ENCODE measurements at regions of chr7 and their contacts with region 1.

Region 1: GRCh38 chr7:42574685-42575084 is 337.2 kb downstream of the C7orf25 start:
- DNase-seq: no peak
- H3K4me3 ChIP-seq: no peak overlapping the region
- H3K27ac ChIP-seq: peak overlapping the region in 3 of 4 donors; percentile 53 to 74 (median 68)
- H3K4me1 ChIP-seq: peaks cover 0 to 58% (median 45%) of the 10 kb centered on the region in 4 donors
- H3K27me3 ChIP-seq: no peaks in the 10 kb centered on the region
- CTCF ChIP-seq: peak in 3 of 4 experiments; percentile 13 to 30 (median 29)
- EP300 ChIP-seq: no peak
- POLR2A ChIP-seq: no peak

Region 2: DNA sequence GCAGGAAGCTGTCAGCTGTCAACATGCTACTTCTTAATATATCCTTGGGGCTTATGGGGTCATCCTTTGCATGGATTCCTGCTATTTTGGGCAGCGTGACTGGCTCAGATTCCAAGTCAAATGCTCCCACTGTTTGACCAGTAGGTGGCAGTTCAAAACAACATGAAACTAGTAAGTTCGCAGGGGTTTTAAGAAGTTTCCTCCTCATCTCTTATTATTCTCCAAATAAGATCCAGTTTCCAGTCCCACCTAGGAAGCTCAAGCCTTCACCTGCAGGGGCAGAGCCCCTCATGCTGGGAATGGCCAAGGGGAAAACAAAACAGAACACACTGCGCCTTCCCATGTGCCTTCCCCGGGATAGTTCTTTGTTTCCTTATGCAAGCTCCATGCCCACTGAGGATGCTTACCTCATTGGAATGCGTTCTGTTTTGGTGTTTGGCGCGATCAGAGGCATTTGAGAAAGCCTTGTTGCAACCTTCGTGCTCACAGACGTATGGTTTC is 597.5 kb before region 1 on chr7:
- intact Hi-C with region 1: loop called (anchors 5 kb)
- DNase-seq: no peak
- H3K4me3 ChIP-seq: no peak overlapping the region
- H3K27ac ChIP-seq: peak overlapping the region in 3 of 4 donors; percentile 58 to 70 (median 65)
- H3K4me1 ChIP-seq: peaks cover 0 to 56% (median 52%) of the 10 kb centered on the region in 4 donors
- H3K27me3 ChIP-seq: no peaks in the 10 kb centered on the region
- CTCF ChIP-seq: peak; percentile 55 to 79 (median 62)
- EP300 ChIP-seq: no peak
- POLR2A ChIP-seq: no peak

Region 3: DNA sequence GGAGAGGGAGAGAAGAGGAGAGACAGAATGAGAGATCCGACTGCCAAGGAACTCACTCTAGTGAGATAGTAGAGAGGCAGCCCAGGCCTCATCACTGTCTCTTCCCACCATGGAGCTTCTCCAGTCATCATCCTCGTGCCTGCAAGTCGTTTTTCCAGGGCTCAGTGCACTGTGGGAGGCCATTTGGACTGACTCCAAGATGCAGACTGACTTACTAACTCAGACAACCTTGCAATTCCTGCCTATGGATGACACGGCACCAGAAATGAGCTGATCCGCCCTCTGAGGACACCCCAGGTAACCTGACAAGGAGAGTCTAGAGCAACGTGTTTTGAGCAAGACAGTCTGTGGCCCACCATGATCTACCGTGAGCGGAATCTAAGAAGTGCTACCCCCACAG is 492.5 kb before region 1 on chr7:
- intact Hi-C with region 1: loop called (anchors 10 kb)
- DNase-seq: peak; percentile 76
- H3K4me3 ChIP-seq: no peak overlapping the region
- H3K27ac ChIP-seq: peak overlapping the region in 3 of 4 donors; percentile 32 to 66 (median 59)
- H3K4me1 ChIP-seq: peaks cover 0 to 76% (median 44%) of the 10 kb centered on the region in 4 donors
- H3K27me3 ChIP-seq: no peaks in the 10 kb centered on the region
- CTCF ChIP-seq: no peak
- EP300 ChIP-seq: no peak
- POLR2A ChIP-seq: no peak

Region 4: DNA sequence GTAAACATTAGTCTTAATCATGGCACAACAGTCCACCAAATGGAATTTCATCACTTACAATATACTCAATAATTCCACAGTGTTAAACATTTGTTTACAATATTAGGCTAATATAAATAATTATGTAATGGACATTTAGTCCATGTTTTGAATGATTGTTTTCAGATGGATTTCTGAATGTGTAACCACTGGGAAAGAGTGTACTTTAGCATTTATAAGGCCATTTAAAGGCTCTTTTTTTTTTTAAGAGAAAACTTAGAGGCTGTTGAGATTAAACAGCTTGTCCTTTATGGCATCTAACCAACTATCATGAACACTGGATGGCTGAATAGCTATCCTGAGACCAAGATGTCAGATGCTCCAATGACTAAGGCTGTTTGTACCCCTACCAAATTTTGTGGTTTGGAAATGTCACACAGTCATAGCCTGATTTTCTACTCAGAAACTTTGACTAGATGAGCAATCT is 89.4 kb before region 1 on chr7:
- intact Hi-C with region 1: loop called (anchors 5 kb)
- DNase-seq: no peak
- H3K4me3 ChIP-seq: no peak overlapping the region
- H3K27ac ChIP-seq: peak overlapping the region in 3 of 4 donors; percentile 62 to 68 (median 65)
- H3K4me1 ChIP-seq: peaks cover 0 to 59% (median 43%) of the 10 kb centered on the region in 4 donors
- H3K27me3 ChIP-seq: no peaks in the 10 kb centered on the region
- CTCF ChIP-seq: no peak
- EP300 ChIP-seq: peak in 1 of 4 donors; percentile 13
- POLR2A ChIP-seq: no peak

Region 5: GRCh38 chr7:42831718-42832431 is 257.2 kb after region 1 on chr7:
- intact Hi-C with region 1: loop called (anchors 10 kb)
- DNase-seq: peak; percentile 80
- H3K4me3 ChIP-seq: no peak overlapping the region
- H3K27ac ChIP-seq: peak overlapping the region in 3 of 4 donors; percentile 40 to 69 (median 65)
- H3K4me1 ChIP-seq: peaks cover 0 to 26% (median 20%) of the 10 kb centered on the region in 4 donors
- H3K27me3 ChIP-seq: no peaks in the 10 kb centered on the region
- CTCF ChIP-seq: peak; percentile 55 to 76 (median 72)
- EP300 ChIP-seq: no peak
- POLR2A ChIP-seq: no peak

Measured in sigmoid colon (tissue), 7 donors.